ENCODE measurements at regions of chr12 and their contacts with region 1.

Region 1: DNA sequence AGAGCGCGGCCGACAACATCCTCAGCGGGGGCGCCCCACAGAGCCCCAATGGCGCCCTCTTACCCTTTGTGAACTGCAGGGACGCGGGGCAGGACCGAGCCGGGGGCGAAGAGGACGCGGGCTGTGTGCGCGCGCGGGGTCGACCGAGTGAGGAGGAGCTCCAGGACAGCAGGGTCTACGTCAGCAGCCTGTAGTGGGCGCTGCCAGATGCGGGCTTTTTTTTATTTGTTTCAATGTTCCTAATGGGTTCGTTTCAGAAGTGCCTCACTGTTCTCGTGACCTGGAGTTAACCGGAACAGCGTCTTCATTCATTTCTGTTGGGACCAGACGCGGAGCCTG is 103.8 kb upstream of the FKBP4 start:
- DNase-seq: peak; percentile 79
- ATAC-seq: peak; percentile 76
- H3K4me3 Mint-ChIP-seq: peak overlapping the region; percentile 86
- H3K27ac Mint-ChIP-seq: peak overlapping the region; percentile 93
- H3K4me1 Mint-ChIP-seq: peaks cover 42% of the 10 kb centered on the region
- H3K27me3 Mint-ChIP-seq: peaks cover 10% of the 10 kb centered on the region

Region 2: GRCh38 chr12:2179953-2180736 is 510.8 kb before region 1 on chr12:
- CTCF ChIA-PET with region 1: no interaction called
- POLR2A ChIA-PET with region 1: no interaction called
- DNase-seq: no peak
- ATAC-seq: no peak
- H3K4me3 Mint-ChIP-seq: no peak overlapping the region
- H3K27ac Mint-ChIP-seq: no peak overlapping the region
- H3K4me1 Mint-ChIP-seq: peaks cover 2% of the 10 kb centered on the region
- H3K27me3 Mint-ChIP-seq: peaks cover 9% of the 10 kb centered on the region

Region 3: GRCh38 chr12:2640705-2641104 is 50.3 kb before region 1 on chr12:
- CTCF ChIA-PET with region 1: no interaction called
- POLR2A ChIA-PET with region 1: no interaction called
- DNase-seq: no peak
- ATAC-seq: no peak
- H3K4me3 Mint-ChIP-seq: no peak overlapping the region
- H3K27ac Mint-ChIP-seq: no peak overlapping the region
- H3K4me1 Mint-ChIP-seq: peaks cover 30% of the 10 kb centered on the region
- H3K27me3 Mint-ChIP-seq: peaks cover 25% of the 10 kb centered on the region

Region 4: DNA sequence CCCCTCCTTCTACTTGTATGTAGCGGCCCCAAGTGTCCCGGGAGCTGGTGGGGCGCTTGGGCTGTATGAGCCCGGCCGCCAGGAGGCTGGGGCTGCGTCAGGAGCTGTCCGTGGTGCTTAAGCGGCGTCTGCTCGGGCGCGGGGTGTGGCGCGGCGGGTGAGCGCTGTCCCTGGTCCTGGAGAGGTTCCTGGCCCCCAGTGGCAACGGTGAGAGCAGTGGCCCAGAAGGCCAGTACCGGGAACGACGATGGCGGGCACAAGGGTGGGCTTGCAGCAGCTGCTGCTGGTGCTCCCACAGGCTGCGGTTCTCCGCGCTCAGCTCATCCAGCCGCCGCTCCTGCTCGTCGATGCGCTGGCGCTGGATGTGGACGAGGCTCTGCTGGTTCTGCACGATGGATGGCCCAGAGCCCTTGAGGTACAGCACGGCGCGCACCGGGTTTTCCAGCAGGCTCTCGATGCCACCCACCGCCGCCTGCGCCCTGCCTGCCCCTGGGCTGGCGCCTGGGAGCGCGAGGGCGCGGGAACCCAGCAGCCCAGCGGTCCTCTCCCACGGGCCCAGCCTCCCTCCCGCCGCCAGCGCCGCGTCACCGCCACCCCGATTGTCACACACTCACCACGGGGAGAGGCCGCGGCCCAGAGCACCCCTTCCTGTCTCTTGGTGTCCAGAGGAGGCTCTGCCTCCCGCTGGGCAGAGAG is 61.8 kb after region 1 on chr12:
- CTCF ChIA-PET with region 1: interaction called, 12 read pairs
- POLR2A ChIA-PET with region 1: no interaction called
- DNase-seq: peak; percentile 87
- ATAC-seq: peak; percentile 100
- H3K4me3 Mint-ChIP-seq: no peak overlapping the region
- H3K27ac Mint-ChIP-seq: no peak overlapping the region
- H3K4me1 Mint-ChIP-seq: no peaks in the 10 kb centered on the region
- H3K27me3 Mint-ChIP-seq: peaks cover 30% of the 10 kb centered on the region

Region 5: DNA sequence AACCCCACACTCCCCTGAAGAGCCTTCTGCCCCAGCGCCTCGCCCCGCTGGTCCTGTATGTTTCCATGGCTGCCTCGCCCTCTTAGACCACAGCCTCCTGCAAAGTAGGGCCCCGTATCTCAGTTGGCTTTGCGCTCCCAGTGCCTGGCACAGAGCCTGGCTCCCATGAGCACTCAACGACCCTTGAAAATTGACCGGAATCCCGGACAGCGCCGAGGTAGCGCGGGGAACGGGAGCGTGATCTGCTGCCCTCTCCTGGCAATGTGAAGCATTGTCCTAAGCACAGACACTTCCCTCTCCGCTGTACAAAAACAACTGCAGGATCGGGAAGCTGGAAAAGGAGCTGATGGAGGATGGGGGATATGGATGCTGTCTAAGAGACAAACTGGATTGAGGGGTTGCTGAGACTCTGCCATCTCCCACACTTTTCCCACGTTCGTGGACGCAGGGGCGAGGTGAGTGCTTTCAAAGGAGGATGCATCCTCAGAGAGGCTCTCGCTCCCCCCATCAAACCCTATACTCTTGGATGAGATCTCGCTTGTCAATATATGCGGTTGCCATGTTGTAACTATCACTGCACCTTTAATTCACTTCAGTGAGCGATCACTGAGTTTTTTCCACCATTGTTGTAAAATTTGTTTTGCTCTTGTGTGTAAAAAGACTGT is 93.1 kb after region 1 on chr12:
- CTCF ChIA-PET with region 1: interaction called, 44 read pairs
- POLR2A ChIA-PET with region 1: interaction called, 3 read pairs
- DNase-seq: peak; percentile 56
- ATAC-seq: peak; percentile 96
- H3K4me3 Mint-ChIP-seq: peak overlapping the region; percentile 48
- H3K27ac Mint-ChIP-seq: no peak overlapping the region
- H3K4me1 Mint-ChIP-seq: peaks cover 10% of the 10 kb centered on the region
- H3K27me3 Mint-ChIP-seq: peaks cover 30% of the 10 kb centered on the region

Region 6: GRCh38 chr12:2812290-2813213 is 121.6 kb after region 1 on chr12 and contains the start of gene ITFG2:
- CTCF ChIA-PET with region 1: interaction called, 11 read pairs
- POLR2A ChIA-PET with region 1: interaction called, 3 read pairs
- DNase-seq: peak; percentile 99
- ATAC-seq: peak; percentile 95
- H3K4me3 Mint-ChIP-seq: peak within 1 kb of the TSS; percentile 98
- H3K27ac Mint-ChIP-seq: peak within 1 kb of the TSS; percentile 99
- H3K4me1 Mint-ChIP-seq: peaks cover 27% of the 10 kb centered on the region
- H3K27me3 Mint-ChIP-seq: no peaks in the 10 kb centered on the region
- total RNA-seq, gene ITFG2: 42.3 to 44.5 TPM